ENCODE measurements at regions of chr14 and their contacts with region 1.

Region 1: GRCh38 chr14:55354500-55354899 is 57.1 kb downstream of the ATG14 start:
- DNase-seq: peak; percentile 63
- CTCF ChIP-seq: peak; percentile 86

Region 2: GRCh38 chr14:55270832-55271565 is 83.5 kb before region 1 on chr14 and contains the start of gene FBXO34:
- in situ Hi-C with region 1: loop called (anchors 25 kb)
- DNase-seq: peak; percentile 96
- CTCF ChIP-seq: peak; percentile 98

Measured in GM13977 (cell line).